ENCODE measurements at regions of chr14 and their contacts with region 1.

Region 1: GRCh38 chr14:101761032-101761880 is at the start of gene PPP2R5C:
- DNase-seq: peak; percentile 91
- ATAC-seq: peak; percentile 66
- H3K4me3 Mint-ChIP-seq: peak within 1 kb of the TSS; percentile 84
- H3K27ac Mint-ChIP-seq: peak within 1 kb of the TSS; percentile 80
- H3K4me1 Mint-ChIP-seq: peaks cover 34% of the 10 kb centered on the region
- H3K27me3 Mint-ChIP-seq: no peaks in the 10 kb centered on the region
- CTCF ChIP-seq: no peak
- total RNA-seq, gene PPP2R5C: 238 to 242 TPM

Region 2: GRCh38 chr14:101731187-101732080 is 29.8 kb before region 1 on chr14:
- CTCF ChIA-PET with region 1: interaction called, 6 read pairs
- POLR2A ChIA-PET with region 1: interaction called, 15 read pairs
- intact Hi-C with region 1: no loop called
- DNase-seq: peak; percentile 95
- ATAC-seq: peak; percentile 93
- H3K4me3 Mint-ChIP-seq: peak overlapping the region; percentile 70
- H3K27ac Mint-ChIP-seq: peak overlapping the region; percentile 97
- H3K4me1 Mint-ChIP-seq: peaks cover 63% of the 10 kb centered on the region
- H3K27me3 Mint-ChIP-seq: no peaks in the 10 kb centered on the region
- CTCF ChIP-seq: no peak

Region 3: DNA sequence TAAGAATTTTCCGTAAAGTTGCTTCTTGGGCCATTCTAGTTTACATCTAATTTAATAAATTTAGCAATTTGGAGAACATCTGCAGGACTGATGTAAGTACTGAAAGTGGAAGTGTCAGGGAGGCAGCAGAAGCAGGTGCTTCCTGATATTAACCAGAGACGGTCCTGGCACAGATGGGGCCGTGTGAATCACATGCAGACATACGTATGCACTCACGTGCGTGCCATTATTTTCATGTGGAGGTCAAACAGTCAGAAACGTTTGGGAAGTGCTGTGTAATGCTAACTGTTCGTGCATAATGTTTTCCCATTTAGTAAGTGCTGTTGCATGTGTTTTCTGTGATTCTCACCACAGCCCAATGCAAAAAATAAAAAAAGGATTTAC is 115.3 kb after region 1 on chr14:
- CTCF ChIA-PET with region 1: no interaction called
- POLR2A ChIA-PET with region 1: no interaction called
- intact Hi-C with region 1: loop called (anchors 5 kb)
- DNase-seq: peak; percentile 90
- ATAC-seq: peak; percentile 69
- H3K4me3 Mint-ChIP-seq: peak overlapping the region; percentile 55
- H3K27ac Mint-ChIP-seq: peak overlapping the region; percentile 92
- H3K4me1 Mint-ChIP-seq: peaks cover 84% of the 10 kb centered on the region
- H3K27me3 Mint-ChIP-seq: no peaks in the 10 kb centered on the region
- CTCF ChIP-seq: no peak

Measured in activated CD8-positive, alpha-beta T cell treated with anti-CD3 and anti-CD28 coated beads for 36 hours (primary cell).